Spleen (tissue), 13 donors: ENCODE measurements at regions of chr2 and their contacts with region 1.

Region 1: GRCh38 chr2:44361330-44362206 is at the starts of genes CAMKMT and PREPL:
- DNase-seq: peak; percentile 99
- H3K4me3 ChIP-seq: peak within 1 kb of the TSS; percentile 69 to 92 (median 82)
- H3K27ac ChIP-seq: peak within 1 kb of the TSS; percentile 94 to 99 (median 96)
- H3K4me1 ChIP-seq: peaks cover 11 to 57% (median 38%) of the 10 kb centered on the region in 6 donors
- H3K27me3 ChIP-seq: no peaks in the 10 kb centered on the region
- CTCF ChIP-seq: peak in 2 of 11 experiments; percentile 5 to 19
- POLR2A ChIP-seq: peak in 2 of 3 donors; percentile 46 to 79
- total RNA-seq, gene CAMKMT: 8.1 to 26.1 (median 11.1) TPM
- total RNA-seq, gene PREPL: 20.8 to 34.4 (median 29.2) TPM

Region 2: DNA sequence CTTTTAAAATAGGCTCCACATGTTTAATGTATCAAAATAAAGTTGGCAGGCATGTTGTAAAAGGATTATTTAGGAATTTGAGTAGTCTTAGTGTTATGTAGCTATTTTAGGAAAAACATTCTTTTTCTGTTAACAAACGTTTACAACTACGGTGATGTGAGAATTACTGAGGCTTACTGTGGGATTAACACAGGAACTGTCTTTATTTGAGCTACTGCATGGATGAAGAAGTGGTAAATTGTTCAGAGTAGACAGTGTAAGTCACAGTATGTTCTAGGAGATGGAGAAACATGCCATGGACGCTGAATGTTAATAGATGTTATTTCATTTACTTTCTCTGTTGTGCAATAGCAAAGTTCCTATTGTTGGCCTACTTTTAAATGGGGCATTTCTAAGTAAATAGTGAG is 191.3 kb before region 1 on chr2:
- intact Hi-C with region 1: loop called (anchors 10 kb)
- DNase-seq: no peak
- H3K4me3 ChIP-seq: peak overlapping the region; percentile 74 to 98 (median 93)
- H3K27ac ChIP-seq: peak overlapping the region; percentile 89 to 99 (median 96)
- H3K4me1 ChIP-seq: peaks cover 22 to 65% (median 51%) of the 10 kb centered on the region in 6 donors
- H3K27me3 ChIP-seq: no peaks in the 10 kb centered on the region
- CTCF ChIP-seq: no peak
- POLR2A ChIP-seq: no peak

Region 3: GRCh38 chr2:44515416-44515815 is 153.8 kb after region 1 on chr2:
- intact Hi-C with region 1: no loop called
- DNase-seq: no peak
- H3K4me3 ChIP-seq: no peak overlapping the region
- H3K27ac ChIP-seq: no peak overlapping the region
- H3K4me1 ChIP-seq: no peaks in the 10 kb centered on the region
- H3K27me3 ChIP-seq: no peaks in the 10 kb centered on the region
- CTCF ChIP-seq: no peak
- POLR2A ChIP-seq: no peak